ENCODE measurements at regions of chr6 and their contacts with region 1.

Region 1: DNA sequence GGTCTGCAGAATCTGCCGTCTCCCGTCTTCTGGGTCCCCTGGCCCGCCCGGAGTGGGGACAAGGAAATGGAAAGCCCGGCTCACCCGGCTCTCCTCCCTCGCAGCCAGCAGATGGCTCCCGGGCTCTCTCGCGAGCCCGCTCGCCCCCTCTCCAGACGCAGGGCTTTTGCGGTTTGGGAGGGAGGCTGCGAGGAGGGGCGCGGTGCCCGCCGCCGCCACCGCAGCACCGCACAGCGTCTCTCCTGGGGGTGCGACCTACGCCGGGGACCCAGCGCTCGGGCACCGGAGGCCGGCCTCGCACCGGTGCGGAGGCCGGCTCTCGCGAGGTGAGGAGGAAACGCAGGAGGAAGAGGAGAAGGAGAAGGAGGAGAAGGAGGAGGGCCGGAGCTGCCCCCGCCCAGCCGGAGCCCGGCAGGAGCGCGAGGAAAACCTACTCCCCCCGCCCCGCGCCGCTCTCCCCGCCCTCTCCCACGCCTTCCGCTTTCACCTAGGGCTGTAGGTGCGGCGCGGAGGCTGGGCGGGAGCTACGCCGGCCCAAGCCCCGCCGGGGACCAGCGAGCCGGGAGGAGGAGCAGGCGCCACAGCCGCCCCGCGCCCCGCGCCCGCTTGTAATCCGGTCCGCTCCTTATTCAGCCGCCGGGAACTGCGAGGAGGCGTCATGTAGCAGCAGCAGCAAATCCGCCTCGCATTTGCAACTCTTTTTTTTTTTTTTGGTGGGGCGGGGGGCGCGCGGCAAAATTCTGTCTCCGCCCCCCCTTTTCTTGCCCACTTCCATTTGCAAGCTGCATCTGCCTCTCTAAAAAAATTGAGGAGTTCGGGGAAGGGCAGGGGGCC is at the start of gene CARMIL1:
- DNase-seq: peak; percentile 67
- H3K4me3 Mint-ChIP-seq: peak within 1 kb of the TSS; percentile 88
- H3K27ac Mint-ChIP-seq: peak within 1 kb of the TSS; percentile 79
- H3K4me1 Mint-ChIP-seq: peaks cover 30% of the 10 kb centered on the region
- H3K27me3 Mint-ChIP-seq: peaks cover 12% of the 10 kb centered on the region
- total RNA-seq, gene CARMIL1: 1.7 and 1.9 TPM in 2 replicates

Region 2: DNA sequence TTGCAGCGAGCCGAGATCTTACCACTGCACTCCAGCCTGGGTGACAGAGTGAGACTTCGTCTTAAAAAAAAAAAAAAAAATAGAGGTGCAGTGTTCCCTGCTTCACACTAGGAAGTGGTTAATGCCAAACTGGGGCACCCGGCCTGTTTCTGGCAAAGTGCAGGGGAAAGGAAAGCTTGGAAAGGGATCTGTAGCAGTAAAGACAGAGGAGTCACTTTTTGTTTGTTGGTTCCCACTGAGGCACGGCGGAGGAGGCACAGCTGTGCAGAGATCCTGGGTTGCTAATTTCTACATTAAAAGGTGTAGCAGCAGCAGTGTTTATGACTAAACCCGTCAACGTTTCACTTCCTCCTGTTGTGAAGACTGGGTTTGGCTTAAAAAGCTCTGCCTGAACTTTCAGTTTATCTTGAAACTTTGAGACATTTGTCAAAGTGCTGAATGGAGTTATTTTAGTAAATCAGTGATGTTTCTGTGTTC is 125.6 kb after region 1 on chr6:
- intact Hi-C with region 1: loop called (anchors 5 kb)
- DNase-seq: peak; percentile 3
- H3K4me3 Mint-ChIP-seq: peak overlapping the region; percentile 72
- H3K27ac Mint-ChIP-seq: peak overlapping the region; percentile 91
- H3K4me1 Mint-ChIP-seq: no peaks in the 10 kb centered on the region
- H3K27me3 Mint-ChIP-seq: peaks cover 2% of the 10 kb centered on the region